Activated naive CD4-positive, alpha-beta T cell treated with anti-CD3 and anti-CD28 coated beads for 36 hours (primary cell): ENCODE measurements at regions of chr1 and their contacts with region 1.

Region 1: GRCh38 chr1:205255941-205256780 is 28.4 kb downstream of the TMCC2 start:
- DNase-seq: peak; percentile 93
- H3K4me3 Mint-ChIP-seq: no peak overlapping the region
- H3K27ac Mint-ChIP-seq: peak overlapping the region; percentile 42
- H3K4me1 Mint-ChIP-seq: peaks cover 25% of the 10 kb centered on the region
- H3K27me3 Mint-ChIP-seq: no peaks in the 10 kb centered on the region

Region 2: GRCh38 chr1:204769997-204770396 is 486.2 kb before region 1 on chr1:
- CTCF ChIA-PET with region 1: no interaction called
- intact Hi-C with region 1: loop called (anchors 5 kb)
- DNase-seq: no peak
- H3K4me3 Mint-ChIP-seq: no peak overlapping the region
- H3K27ac Mint-ChIP-seq: no peak overlapping the region
- H3K4me1 Mint-ChIP-seq: no peaks in the 10 kb centered on the region
- H3K27me3 Mint-ChIP-seq: peaks cover 3% of the 10 kb centered on the region

Region 3: GRCh38 chr1:204989266-204990058 is 266.7 kb before region 1 on chr1:
- CTCF ChIA-PET with region 1: interaction called, 14 read pairs
- intact Hi-C with region 1: loop called (anchors 1 kb)
- DNase-seq: peak; percentile 82
- H3K4me3 Mint-ChIP-seq: no peak overlapping the region
- H3K27ac Mint-ChIP-seq: no peak overlapping the region
- H3K4me1 Mint-ChIP-seq: peaks cover 12% of the 10 kb centered on the region
- H3K27me3 Mint-ChIP-seq: no peaks in the 10 kb centered on the region

Region 4: GRCh38 chr1:205141236-205142101 is 114.7 kb before region 1 on chr1:
- CTCF ChIA-PET with region 1: interaction called, 11 read pairs
- intact Hi-C with region 1: loop called (anchors 1 kb)
- DNase-seq: peak; percentile 92
- H3K4me3 Mint-ChIP-seq: no peak overlapping the region
- H3K27ac Mint-ChIP-seq: no peak overlapping the region
- H3K4me1 Mint-ChIP-seq: peaks cover 7% of the 10 kb centered on the region
- H3K27me3 Mint-ChIP-seq: no peaks in the 10 kb centered on the region

Region 5: DNA sequence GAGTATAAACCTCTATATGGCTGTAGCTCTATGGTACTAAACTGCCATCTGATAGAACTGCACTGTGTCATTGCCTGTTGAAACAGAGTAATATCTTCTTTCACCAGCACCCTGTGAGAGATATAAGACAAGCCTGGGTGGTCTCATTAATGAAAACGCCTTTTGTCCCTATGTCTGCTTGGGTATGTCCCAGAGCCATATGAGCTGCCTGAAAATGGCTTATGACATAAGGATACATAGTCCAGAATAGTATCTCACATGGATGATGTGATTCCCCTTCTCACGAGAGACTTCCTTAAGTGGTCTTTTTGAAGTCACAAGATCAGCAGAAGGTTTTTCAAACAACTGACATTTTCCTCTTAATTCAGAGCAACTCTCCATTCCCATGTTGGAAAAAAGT is 35.7 kb before region 1 on chr1:
- CTCF ChIA-PET with region 1: interaction called, 12 read pairs
- intact Hi-C with region 1: no loop called
- DNase-seq: no peak
- H3K4me3 Mint-ChIP-seq: no peak overlapping the region
- H3K27ac Mint-ChIP-seq: no peak overlapping the region
- H3K4me1 Mint-ChIP-seq: peaks cover 5% of the 10 kb centered on the region
- H3K27me3 Mint-ChIP-seq: no peaks in the 10 kb centered on the region

Region 6: DNA sequence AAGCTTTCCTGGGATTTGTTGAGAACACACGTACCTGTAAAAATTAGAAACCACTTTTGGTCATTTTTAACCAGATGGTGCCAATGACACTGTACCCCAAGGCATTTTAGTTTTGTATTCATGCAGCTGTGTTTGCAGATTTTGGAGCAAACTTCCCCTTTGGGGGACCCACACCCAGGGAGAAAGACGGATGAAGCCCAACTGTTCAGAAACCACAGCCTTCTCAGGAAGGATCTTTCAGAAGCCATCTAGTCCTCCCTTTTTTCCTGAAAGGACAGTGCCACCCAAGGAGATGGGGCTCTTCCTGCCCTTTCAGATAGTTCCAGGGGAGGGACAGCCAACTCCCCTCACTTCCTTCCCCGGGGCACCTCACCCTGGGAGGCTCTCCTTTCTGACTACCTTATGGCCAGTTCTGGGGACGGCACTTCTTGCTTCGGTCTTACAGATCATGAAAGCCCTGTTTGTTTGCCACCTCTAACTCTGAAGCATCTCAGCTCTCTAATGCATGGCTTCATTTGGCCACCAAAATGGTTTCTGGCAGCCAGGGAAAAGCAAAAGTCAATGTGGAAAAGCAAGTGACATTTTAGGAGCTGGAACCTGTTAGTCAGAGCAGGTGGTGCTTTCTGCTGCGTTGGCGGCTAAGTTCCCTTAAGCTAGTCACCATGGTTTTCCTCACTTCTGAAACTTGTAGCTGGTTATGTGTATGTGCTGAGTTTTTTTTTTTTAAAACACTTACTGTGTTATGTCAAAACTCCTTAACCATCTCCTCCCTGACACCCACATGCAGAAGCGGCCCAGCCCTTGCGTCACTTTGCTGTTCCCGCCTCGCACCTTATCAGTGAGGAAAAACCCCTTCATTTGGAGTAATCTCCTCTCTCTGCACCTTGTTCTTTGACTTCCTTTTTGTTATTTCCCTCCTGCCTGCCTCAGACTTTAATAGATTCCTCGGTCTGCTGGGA is 18.4 kb before region 1 on chr1:
- CTCF ChIA-PET with region 1: interaction called, 277 read pairs
- intact Hi-C with region 1: loop called (anchors 1 kb)
- DNase-seq: peak; percentile 92
- H3K4me3 Mint-ChIP-seq: peak overlapping the region; percentile 44
- H3K27ac Mint-ChIP-seq: peak overlapping the region; percentile 98
- H3K4me1 Mint-ChIP-seq: peaks cover 77% of the 10 kb centered on the region
- H3K27me3 Mint-ChIP-seq: no peaks in the 10 kb centered on the region

Region 7: GRCh38 chr1:205273551-205273982 is 17.4 kb after region 1 on chr1:
- CTCF ChIA-PET with region 1: interaction called, 57 read pairs
- intact Hi-C with region 1: no loop called
- DNase-seq: peak; percentile 94
- H3K4me3 Mint-ChIP-seq: no peak overlapping the region
- H3K27ac Mint-ChIP-seq: peak overlapping the region; percentile 27
- H3K4me1 Mint-ChIP-seq: peaks cover 51% of the 10 kb centered on the region
- H3K27me3 Mint-ChIP-seq: no peaks in the 10 kb centered on the region